CD4-positive, alpha-beta memory T cell (primary cell): ENCODE measurements at regions of chr11 and their contacts with region 1.

Region 1: GRCh38 chr11:9982800-9983579 is 311.0 kb downstream of the SBF2 start:
- DNase-seq: no peak
- H3K4me3 ChIP-seq: no peak overlapping the region
- H3K4me3 Mint-ChIP-seq: no peak overlapping the region
- H3K27ac ChIP-seq: no peak overlapping the region
- H3K27ac Mint-ChIP-seq: no peak overlapping the region
- H3K4me1 ChIP-seq: no peaks in the 10 kb centered on the region
- H3K4me1 Mint-ChIP-seq: no peaks in the 10 kb centered on the region
- H3K27me3 ChIP-seq: no peaks in the 10 kb centered on the region
- H3K27me3 Mint-ChIP-seq: no peaks in the 10 kb centered on the region

Region 2: GRCh38 chr11:9193321-9193720 is 789.7 kb before region 1 on chr11:
- CTCF ChIA-PET with region 1: no interaction called
- POLR2A ChIA-PET with region 1: no interaction called
- intact Hi-C with region 1: no loop called
- DNase-seq: no peak
- H3K4me3 ChIP-seq: no peak overlapping the region
- H3K4me3 Mint-ChIP-seq: no peak overlapping the region
- H3K27ac ChIP-seq: no peak overlapping the region
- H3K27ac Mint-ChIP-seq: peak overlapping the region in 2 of 7 donors; percentile 16 to 19
- H3K4me1 ChIP-seq: no peaks in the 10 kb centered on the region
- H3K4me1 Mint-ChIP-seq: no peaks in the 10 kb centered on the region
- H3K27me3 ChIP-seq: no peaks in the 10 kb centered on the region
- H3K27me3 Mint-ChIP-seq: no peaks in the 10 kb centered on the region

Region 3: GRCh38 chr11:9972989-9973388 is 10.0 kb before region 1 on chr11:
- CTCF ChIA-PET with region 1: interaction called, 20 read pairs
- POLR2A ChIA-PET with region 1: no interaction called
- intact Hi-C with region 1: no loop called
- DNase-seq: peak in 4 of 5 donors; percentile 8 to 32 (median 18)
- H3K4me3 ChIP-seq: no peak overlapping the region
- H3K4me3 Mint-ChIP-seq: no peak overlapping the region
- H3K27ac ChIP-seq: no peak overlapping the region
- H3K27ac Mint-ChIP-seq: no peak overlapping the region
- H3K4me1 ChIP-seq: no peaks in the 10 kb centered on the region
- H3K4me1 Mint-ChIP-seq: no peaks in the 10 kb centered on the region
- H3K27me3 ChIP-seq: no peaks in the 10 kb centered on the region
- H3K27me3 Mint-ChIP-seq: no peaks in the 10 kb centered on the region

Region 4: GRCh38 chr11:10026514-10026913 is 43.5 kb after region 1 on chr11:
- CTCF ChIA-PET with region 1: no interaction called
- POLR2A ChIA-PET with region 1: no interaction called
- intact Hi-C with region 1: no loop called
- DNase-seq: no peak
- H3K4me3 ChIP-seq: no peak overlapping the region
- H3K4me3 Mint-ChIP-seq: no peak overlapping the region
- H3K27ac ChIP-seq: no peak overlapping the region
- H3K27ac Mint-ChIP-seq: no peak overlapping the region
- H3K4me1 ChIP-seq: peaks cover 6% of the 10 kb centered on the region
- H3K4me1 Mint-ChIP-seq: peaks cover 4 to 7% (median 7%) of the 10 kb centered on the region in 4 donors
- H3K27me3 ChIP-seq: no peaks in the 10 kb centered on the region
- H3K27me3 Mint-ChIP-seq: peaks cover 0 to 2% of the 10 kb centered on the region in 2 donors